Sciatic nerve (tissue), 2 donors: ENCODE measurements at regions of chr21 and their contacts with region 1.

Region 1: DNA sequence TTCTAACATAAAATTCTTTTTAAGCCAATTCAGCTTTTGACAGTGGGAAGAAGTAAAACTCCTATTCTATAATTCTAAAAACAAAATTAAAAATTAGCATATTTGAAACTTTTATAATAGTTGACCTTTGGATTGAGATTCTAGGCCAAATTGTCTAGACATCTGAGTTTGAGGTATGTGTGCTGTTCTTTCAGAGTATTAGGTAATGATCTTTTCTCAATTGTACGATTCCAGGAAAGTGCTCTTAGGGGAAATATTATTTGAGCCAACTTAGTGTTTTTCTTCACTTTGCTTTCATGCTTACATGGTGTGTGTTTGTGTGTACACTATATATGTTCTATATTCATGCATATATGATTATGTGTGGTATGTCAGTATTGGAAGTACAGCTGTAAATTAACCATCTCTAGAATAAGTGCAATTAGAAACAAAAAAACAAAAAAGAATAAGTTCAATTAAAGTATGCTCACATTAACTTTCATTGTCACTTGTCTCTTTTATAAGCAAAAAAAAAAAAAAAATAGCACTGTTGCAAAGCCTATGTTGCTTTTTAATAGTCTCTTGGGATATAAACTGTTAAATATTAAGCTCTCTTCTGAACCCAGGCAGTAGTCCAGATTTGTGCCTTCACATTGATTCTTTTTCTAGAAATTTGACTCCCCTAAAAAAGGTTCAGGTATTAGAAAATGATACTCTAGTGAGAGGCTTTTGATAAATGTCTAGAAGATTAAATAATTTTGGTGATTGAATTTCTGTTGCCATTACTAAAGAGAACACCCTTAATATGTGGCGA is 132.2 kb downstream of the ATP5PO start:
- DNase-seq: no peak
- ATAC-seq: peak; percentile 39

Region 2: GRCh38 chr21:33761441-33762036 is 21.8 kb before region 1 on chr21:
- intact Hi-C with region 1: loop called (anchors 2 kb)
- DNase-seq: no peak
- ATAC-seq: peak; percentile 90